ENCODE measurements at regions of chr10 and their contacts with region 1.

Region 1: DNA sequence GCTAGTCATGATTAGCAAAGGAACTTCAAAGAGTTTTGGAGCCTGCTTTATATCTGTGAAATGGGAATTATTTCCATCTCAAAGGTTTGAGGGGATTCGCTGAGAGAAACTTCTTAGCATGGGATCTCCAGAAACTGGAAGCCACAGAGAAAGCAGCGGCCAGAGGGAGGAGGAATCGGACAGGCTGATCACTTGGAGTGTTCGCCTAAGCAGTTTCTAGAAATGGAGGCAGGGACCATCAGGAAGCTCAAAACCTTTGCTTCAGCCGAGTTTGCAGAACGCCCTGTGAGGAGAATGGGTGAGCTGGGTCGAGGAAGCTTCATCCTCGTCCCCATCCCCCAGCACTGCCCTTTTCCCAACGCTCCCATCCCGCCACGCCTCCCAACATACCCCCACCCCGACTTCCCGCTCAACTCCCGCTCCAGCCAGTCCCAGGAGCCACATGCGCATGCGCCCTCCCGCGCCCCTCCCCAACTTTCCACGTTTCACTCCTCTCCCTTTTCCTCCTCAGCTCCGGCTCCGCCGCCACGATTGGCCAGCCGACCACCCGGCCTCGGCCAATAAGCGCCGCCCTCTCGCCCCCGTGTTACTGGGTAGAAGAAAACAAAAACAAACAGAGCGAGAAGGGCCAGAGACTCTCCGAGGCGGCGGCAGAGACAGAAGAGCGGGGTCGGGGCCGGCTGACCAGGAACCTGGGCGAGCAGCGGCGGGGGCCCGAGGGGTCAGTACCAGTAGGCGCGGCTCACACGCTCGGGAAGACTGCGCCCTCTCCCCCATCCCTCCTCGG is at the start of gene PDCD4:
- DNase-seq: peak; percentile 89 to 96 (median 92)
- H3K4me3 ChIP-seq: peak within 1 kb of the TSS; percentile 67 to 95
- H3K4me3 Mint-ChIP-seq: peak within 1 kb of the TSS; percentile 96 to 99 (median 96)
- H3K27ac ChIP-seq: peak within 1 kb of the TSS; percentile 98
- H3K27ac Mint-ChIP-seq: peak within 1 kb of the TSS; percentile 91 to 100 (median 99)
- H3K4me1 ChIP-seq: peaks cover 78% of the 10 kb centered on the region
- H3K4me1 Mint-ChIP-seq: peaks cover 44 to 86% (median 62%) of the 10 kb centered on the region in 4 donors
- H3K27me3 ChIP-seq: no peaks in the 10 kb centered on the region
- H3K27me3 Mint-ChIP-seq: no peaks in the 10 kb centered on the region
- total RNA-seq, gene PDCD4: 358 to 376 TPM

Region 2: GRCh38 chr10:110774069-110775019 is 97.1 kb before region 1 on chr10:
- CTCF ChIA-PET with region 1: no interaction called
- POLR2A ChIA-PET with region 1: interaction called, 14 read pairs
- intact Hi-C with region 1: no loop called
- DNase-seq: peak in 1 of 5 donors; percentile 59
- H3K4me3 ChIP-seq: no peak overlapping the region
- H3K4me3 Mint-ChIP-seq: peak overlapping the region in 1 of 8 donors; percentile 46
- H3K27ac ChIP-seq: no peak overlapping the region
- H3K27ac Mint-ChIP-seq: peak overlapping the region; percentile 42 to 88 (median 67)
- H3K4me1 ChIP-seq: peaks cover 15% of the 10 kb centered on the region
- H3K4me1 Mint-ChIP-seq: peaks cover 11 to 18% (median 17%) of the 10 kb centered on the region in 4 donors
- H3K27me3 ChIP-seq: no peaks in the 10 kb centered on the region
- H3K27me3 Mint-ChIP-seq: no peaks in the 10 kb centered on the region

Region 3: GRCh38 chr10:110843031-110843430 is 28.5 kb before region 1 on chr10:
- CTCF ChIA-PET with region 1: interaction called, 6 read pairs
- POLR2A ChIA-PET with region 1: interaction called, 27 read pairs
- intact Hi-C with region 1: no loop called
- DNase-seq: peak; percentile 44 to 78 (median 59)
- H3K4me3 ChIP-seq: no peak overlapping the region
- H3K4me3 Mint-ChIP-seq: peak overlapping the region; percentile 7 to 83 (median 34)
- H3K27ac ChIP-seq: peak overlapping the region; percentile 5
- H3K27ac Mint-ChIP-seq: peak overlapping the region; percentile 54 to 95 (median 85)
- H3K4me1 ChIP-seq: peaks cover 35% of the 10 kb centered on the region
- H3K4me1 Mint-ChIP-seq: peaks cover 28 to 62% (median 46%) of the 10 kb centered on the region in 4 donors
- H3K27me3 ChIP-seq: no peaks in the 10 kb centered on the region
- H3K27me3 Mint-ChIP-seq: no peaks in the 10 kb centered on the region

Region 4: GRCh38 chr10:110857265-110858158 is 14.0 kb before region 1 on chr10:
- CTCF ChIA-PET with region 1: interaction called, 31 read pairs
- POLR2A ChIA-PET with region 1: interaction called, 214 read pairs
- intact Hi-C with region 1: loop called (anchors 1 kb)
- DNase-seq: peak in 4 of 5 donors; percentile 51 to 71 (median 56)
- H3K4me3 ChIP-seq: no peak overlapping the region
- H3K4me3 Mint-ChIP-seq: peak overlapping the region in 7 of 8 donors; percentile 53 to 89 (median 72)
- H3K27ac ChIP-seq: peak overlapping the region; percentile 57
- H3K27ac Mint-ChIP-seq: peak overlapping the region; percentile 91 to 99 (median 97)
- H3K4me1 ChIP-seq: peaks cover 91% of the 10 kb centered on the region
- H3K4me1 Mint-ChIP-seq: peaks cover 67 to 92% (median 79%) of the 10 kb centered on the region in 4 donors
- H3K27me3 ChIP-seq: no peaks in the 10 kb centered on the region
- H3K27me3 Mint-ChIP-seq: no peaks in the 10 kb centered on the region

Region 5: GRCh38 chr10:110893559-110894179 is 22.2 kb after region 1 on chr10:
- CTCF ChIA-PET with region 1: interaction called, 12 read pairs
- POLR2A ChIA-PET with region 1: interaction called, 5 read pairs
- intact Hi-C with region 1: loop called (anchors 1 kb)
- DNase-seq: peak in 4 of 5 donors; percentile 60 to 66 (median 64)
- H3K4me3 ChIP-seq: no peak overlapping the region
- H3K4me3 Mint-ChIP-seq: no peak overlapping the region
- H3K27ac ChIP-seq: peak overlapping the region; percentile 6
- H3K27ac Mint-ChIP-seq: peak overlapping the region in 4 of 7 donors; percentile 0 to 43 (median 36)
- H3K4me1 ChIP-seq: peaks cover 49% of the 10 kb centered on the region
- H3K4me1 Mint-ChIP-seq: peaks cover 28 to 64% (median 50%) of the 10 kb centered on the region in 4 donors
- H3K27me3 ChIP-seq: no peaks in the 10 kb centered on the region
- H3K27me3 Mint-ChIP-seq: no peaks in the 10 kb centered on the region

Region 6: DNA sequence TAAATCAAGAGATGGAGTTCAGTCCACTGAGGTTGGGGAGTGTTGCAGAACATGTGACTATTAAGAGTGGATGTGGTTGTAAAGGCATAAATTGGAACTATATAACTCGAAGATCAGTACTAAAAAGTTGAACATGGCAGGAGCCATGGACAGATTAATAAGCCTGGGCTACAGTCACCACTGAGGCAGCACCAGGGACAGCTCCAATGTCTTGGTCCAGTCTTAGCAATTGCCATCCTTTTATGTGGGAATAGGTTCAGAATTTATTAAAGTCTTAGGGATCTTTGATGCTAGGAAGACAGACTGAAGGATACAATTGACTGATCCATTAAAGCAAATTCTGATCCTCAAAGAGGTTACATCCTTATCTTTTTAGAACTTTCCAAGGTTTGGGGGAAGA is 361.9 kb after region 1 on chr10:
- CTCF ChIA-PET with region 1: no interaction called
- POLR2A ChIA-PET with region 1: no interaction called
- intact Hi-C with region 1: no loop called
- DNase-seq: no peak
- H3K4me3 ChIP-seq: no peak overlapping the region
- H3K4me3 Mint-ChIP-seq: no peak overlapping the region
- H3K27ac ChIP-seq: no peak overlapping the region
- H3K27ac Mint-ChIP-seq: no peak overlapping the region
- H3K4me1 ChIP-seq: no peaks in the 10 kb centered on the region
- H3K4me1 Mint-ChIP-seq: no peaks in the 10 kb centered on the region
- H3K27me3 ChIP-seq: no peaks in the 10 kb centered on the region
- H3K27me3 Mint-ChIP-seq: peaks cover 11 to 32% of the 10 kb centered on the region in 2 donors

Measured in CD4-positive, alpha-beta memory T cell (primary cell).